ENCODE measurements at regions of chr19 and their contacts with region 1.

Region 1: GRCh38 chr19:48674921-48675824 is 2.4 kb upstream of the NTN5 start:
- DNase-seq: peak; percentile 84
- H3K4me3 ChIP-seq: no peak overlapping the region
- H3K27ac ChIP-seq: no peak overlapping the region
- H3K4me1 ChIP-seq: no peaks in the 10 kb centered on the region
- H3K27me3 ChIP-seq: no peaks in the 10 kb centered on the region
- CTCF ChIP-seq: peak; percentile 74 to 90 (median 84)
- POLR2A ChIP-seq: no peak

Region 2: GRCh38 chr19:48738557-48739399 is 63.6 kb after region 1 on chr19:
- intact Hi-C with region 1: loop called (anchors 10 kb)
- DNase-seq: peak; percentile 94
- H3K4me3 ChIP-seq: peak overlapping the region; percentile 38 to 40
- H3K27ac ChIP-seq: peak overlapping the region; percentile 61 to 71
- H3K4me1 ChIP-seq: peaks cover 7% of the 10 kb centered on the region
- H3K27me3 ChIP-seq: no peaks in the 10 kb centered on the region
- CTCF ChIP-seq: peak; percentile 41 to 78 (median 62)
- POLR2A ChIP-seq: peak; percentile 26